Activated T-helper 1 cell treated with anti-CD3 and anti-CD28 coated beads, Interleukin-12 subunit alpha, Interleukin-12 subunit beta, Interleukin-2, Interleukin-4 antibody, amounts not matched to agents 30 ng/mL and 10 ng/mL and 1 ng/mL, durations not matched to agents 14 hours and 24 hours and 36 hours (primary cell): ENCODE measurements at regions of chr7 and their contacts with region 1.

Region 1: DNA sequence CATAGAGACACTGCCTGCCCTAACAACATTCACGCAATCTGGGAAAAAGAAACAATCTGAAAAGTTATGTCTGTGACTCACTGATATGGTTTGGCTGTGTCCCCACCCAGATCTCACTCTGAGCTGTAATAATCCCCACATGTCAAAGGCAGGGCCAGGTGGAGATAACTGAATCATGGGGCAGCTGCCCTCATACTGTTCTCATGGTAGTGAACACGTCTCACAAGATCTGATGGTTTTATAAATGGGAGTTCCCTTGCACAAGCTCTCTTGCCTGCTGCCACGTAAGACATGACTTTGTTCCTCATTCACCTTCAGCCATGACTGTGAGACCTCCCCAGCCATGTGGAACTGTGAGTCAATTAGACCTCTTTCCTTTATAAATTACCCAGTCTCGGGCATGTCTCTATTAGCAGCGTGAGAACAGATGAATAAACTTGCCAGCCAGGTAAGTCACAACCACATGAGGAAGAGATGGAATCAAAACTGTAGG is 341.5 kb upstream of the AOAH start:
- DNase-seq: no peak
- H3K4me3 Mint-ChIP-seq: peak overlapping the region; percentile 16
- H3K27ac Mint-ChIP-seq: peak overlapping the region; percentile 88
- H3K4me1 Mint-ChIP-seq: peaks cover 48% of the 10 kb centered on the region
- H3K27me3 Mint-ChIP-seq: no peaks in the 10 kb centered on the region

Region 2: DNA sequence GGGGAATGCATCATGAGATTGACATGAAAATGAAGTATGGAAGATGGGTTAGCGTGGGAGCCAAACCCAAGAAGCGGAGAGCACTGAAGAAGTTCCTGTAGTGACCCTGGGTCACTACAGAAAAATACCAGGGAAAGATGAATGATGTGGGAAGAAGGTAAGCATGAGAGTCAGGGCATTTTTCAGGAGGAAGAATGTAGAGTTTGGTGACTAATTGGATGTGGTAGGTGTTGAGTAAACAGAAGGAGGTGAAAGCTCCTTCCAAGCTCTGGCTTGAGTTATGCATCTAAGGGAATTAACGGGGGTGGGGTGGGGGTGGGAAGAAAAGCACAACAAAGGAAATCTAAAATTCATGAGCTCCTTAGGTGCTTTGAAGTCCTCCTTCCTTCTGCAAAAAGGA is 103.5 kb before region 1 on chr7:
- intact Hi-C with region 1: loop called (anchors 5 kb)
- DNase-seq: no peak
- H3K4me3 Mint-ChIP-seq: no peak overlapping the region
- H3K27ac Mint-ChIP-seq: peak overlapping the region; percentile 55
- H3K4me1 Mint-ChIP-seq: peaks cover 44% of the 10 kb centered on the region
- H3K27me3 Mint-ChIP-seq: no peaks in the 10 kb centered on the region

Region 3: DNA sequence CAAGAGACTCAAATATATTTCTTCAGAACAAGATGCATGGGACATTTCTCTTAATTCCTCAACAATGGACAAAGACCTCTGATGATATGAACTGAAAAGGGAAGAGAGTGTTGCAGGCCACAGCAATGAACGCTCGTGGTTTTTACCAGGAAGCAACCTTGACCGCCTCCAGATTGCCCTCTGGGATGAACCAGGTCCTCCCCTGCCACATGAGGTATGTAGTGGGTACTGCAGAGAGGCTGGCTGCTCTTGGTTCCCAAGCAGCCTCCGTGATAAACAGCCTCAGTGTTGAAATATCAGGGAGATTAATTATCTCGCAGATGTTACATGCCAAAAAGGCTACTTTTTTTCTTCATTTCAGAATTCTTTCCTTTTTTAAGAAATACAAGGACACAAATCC is 44.0 kb after region 1 on chr7:
- intact Hi-C with region 1: loop called (anchors 5 kb)
- DNase-seq: no peak
- H3K4me3 Mint-ChIP-seq: no peak overlapping the region
- H3K27ac Mint-ChIP-seq: peak overlapping the region; percentile 57
- H3K4me1 Mint-ChIP-seq: peaks cover 38% of the 10 kb centered on the region
- H3K27me3 Mint-ChIP-seq: no peaks in the 10 kb centered on the region